T-cell (primary cell): ENCODE measurements at regions of chr2 and their contacts with region 1.

Region 1: DNA sequence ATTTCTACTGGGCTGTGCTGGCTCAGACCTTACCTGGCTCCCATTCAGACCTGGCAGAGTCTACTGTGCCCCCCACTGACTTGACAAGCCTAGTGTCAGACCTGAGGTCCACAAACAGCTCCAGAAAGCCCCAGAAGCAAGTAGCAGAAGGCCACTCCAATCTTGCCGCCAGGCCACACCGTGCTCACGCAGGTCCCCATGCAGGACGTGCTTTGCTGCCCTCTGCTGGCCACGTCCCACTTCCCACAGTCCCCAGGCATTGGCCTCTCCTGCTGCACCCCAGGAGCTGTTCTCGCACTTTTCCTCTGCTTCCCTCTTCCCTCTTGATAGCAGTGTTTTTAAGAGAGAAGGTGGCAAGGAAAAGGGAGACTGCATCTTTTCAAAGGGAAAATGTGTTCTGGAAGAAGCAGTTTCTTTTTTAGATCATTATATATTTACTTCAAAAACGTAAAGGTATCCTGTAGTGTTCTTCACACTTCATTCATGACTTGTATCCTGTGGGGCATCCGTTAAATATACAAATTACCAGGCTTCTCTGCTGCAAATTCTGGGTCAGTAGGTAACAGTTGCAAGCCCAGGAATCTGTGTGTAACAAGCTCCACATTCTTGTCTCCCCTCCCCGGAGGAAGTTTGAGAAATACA is 81.4 kb upstream of the PAPOLG start:
- DNase-seq: peak; percentile 37 to 82 (median 68)
- ATAC-seq: peak; percentile 84 to 95 (median 92)
- H3K4me3 ChIP-seq: no peak overlapping the region
- H3K4me3 Mint-ChIP-seq: no peak overlapping the region
- H3K27ac ChIP-seq: no peak overlapping the region
- H3K27ac Mint-ChIP-seq: no peak overlapping the region
- H3K4me1 ChIP-seq: peaks cover 0 to 5% of the 10 kb centered on the region in 2 experiments
- H3K4me1 Mint-ChIP-seq: peaks cover 0 to 4% (median 2%) of the 10 kb centered on the region in 3 donors
- H3K27me3 ChIP-seq: peaks cover 0 to 7% of the 10 kb centered on the region in 2 experiments
- H3K27me3 Mint-ChIP-seq: peaks cover 12% of the 10 kb centered on the region in 2 donors

Region 2: GRCh38 chr2:59021786-59022185 is 1652.9 kb before region 1 on chr2:
- CTCF ChIA-PET with region 1: interaction called in 1 of 2 experiments, 11 read pairs
- POLR2A ChIA-PET with region 1: no interaction called
- DNase-seq: no peak
- ATAC-seq: no peak
- H3K4me3 ChIP-seq: no peak overlapping the region
- H3K4me3 Mint-ChIP-seq: no peak overlapping the region
- H3K27ac ChIP-seq: no peak overlapping the region
- H3K27ac Mint-ChIP-seq: no peak overlapping the region
- H3K4me1 ChIP-seq: no peaks in the 10 kb centered on the region
- H3K4me1 Mint-ChIP-seq: no peaks in the 10 kb centered on the region
- H3K27me3 ChIP-seq: no peaks in the 10 kb centered on the region
- H3K27me3 Mint-ChIP-seq: no peaks in the 10 kb centered on the region

Region 3: DNA sequence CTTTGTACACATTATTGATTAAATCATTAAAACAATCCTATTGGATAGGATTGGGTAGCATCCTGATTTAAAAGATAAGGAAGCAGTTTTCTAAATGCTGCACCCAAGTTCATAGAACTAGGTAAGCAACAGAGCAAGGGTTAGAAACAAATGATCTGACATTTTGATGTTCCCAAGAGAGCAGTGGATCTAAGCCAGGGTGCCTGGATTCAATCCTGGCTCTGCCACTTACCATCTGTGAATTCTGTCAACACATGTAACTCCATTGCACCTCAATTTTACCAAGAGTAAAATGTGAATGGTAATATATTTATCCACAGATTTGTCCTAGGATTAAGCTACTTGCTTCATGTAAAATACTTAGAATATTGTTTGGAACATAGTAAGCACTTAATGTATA is 1450.9 kb before region 1 on chr2:
- CTCF ChIA-PET with region 1: no interaction called
- POLR2A ChIA-PET with region 1: no interaction called
- DNase-seq: no peak
- ATAC-seq: no peak
- H3K4me3 ChIP-seq: no peak overlapping the region
- H3K4me3 Mint-ChIP-seq: no peak overlapping the region
- H3K27ac ChIP-seq: no peak overlapping the region
- H3K27ac Mint-ChIP-seq: no peak overlapping the region
- H3K4me1 ChIP-seq: no peaks in the 10 kb centered on the region
- H3K4me1 Mint-ChIP-seq: no peaks in the 10 kb centered on the region
- H3K27me3 ChIP-seq: no peaks in the 10 kb centered on the region
- H3K27me3 Mint-ChIP-seq: peaks cover 1 to 6% of the 10 kb centered on the region in 2 donors

Region 4: DNA sequence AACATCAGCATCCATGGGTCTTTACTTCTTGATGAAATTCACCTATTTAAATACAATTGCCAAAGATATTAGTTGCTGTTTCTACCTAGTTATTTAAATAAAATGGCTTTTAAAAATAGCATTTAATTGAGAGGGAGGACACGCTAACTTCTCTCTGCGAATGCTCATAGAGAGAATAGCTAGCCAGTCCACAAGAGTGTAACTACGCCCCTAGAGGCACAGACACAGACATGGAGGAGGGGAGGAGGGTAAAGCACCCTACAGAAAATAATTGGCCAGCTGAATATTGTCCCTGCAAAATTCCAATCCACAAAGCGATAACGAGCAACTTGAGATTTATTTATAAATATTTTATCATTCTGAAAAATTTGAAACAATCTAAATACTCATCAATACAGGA is 15.6 kb before region 1 on chr2:
- CTCF ChIA-PET with region 1: no interaction called
- POLR2A ChIA-PET with region 1: no interaction called
- DNase-seq: no peak
- ATAC-seq: no peak
- H3K4me3 ChIP-seq: no peak overlapping the region
- H3K4me3 Mint-ChIP-seq: no peak overlapping the region
- H3K27ac ChIP-seq: no peak overlapping the region
- H3K27ac Mint-ChIP-seq: no peak overlapping the region
- H3K4me1 ChIP-seq: no peaks in the 10 kb centered on the region
- H3K4me1 Mint-ChIP-seq: peaks cover 0 to 6% (median 0%) of the 10 kb centered on the region in 3 donors
- H3K27me3 ChIP-seq: peaks cover 0 to 4% of the 10 kb centered on the region in 2 experiments
- H3K27me3 Mint-ChIP-seq: peaks cover 14 to 18% of the 10 kb centered on the region in 2 donors

Region 5: DNA sequence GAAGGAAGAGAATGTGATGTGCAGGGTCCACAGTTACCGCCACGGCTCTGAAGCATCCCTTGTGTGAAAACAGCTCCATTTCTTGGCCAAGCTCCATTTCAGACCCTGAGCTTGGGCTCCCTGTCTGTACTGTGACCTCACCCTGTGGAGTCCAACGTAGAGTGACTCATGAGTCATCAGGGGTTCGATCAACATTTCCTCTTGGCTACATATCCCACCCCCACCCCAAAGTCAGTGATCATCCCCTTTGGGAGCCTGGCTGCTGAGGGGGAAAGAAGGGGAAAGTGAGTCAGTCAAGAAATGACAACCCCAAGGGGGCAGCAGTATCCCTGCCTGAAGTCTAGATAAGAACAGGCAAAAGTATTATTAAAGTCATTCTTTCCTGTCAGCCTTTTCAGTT is 143.6 kb after region 1 on chr2:
- CTCF ChIA-PET with region 1: no interaction called
- POLR2A ChIA-PET with region 1: no interaction called
- DNase-seq: peak in 3 of 35 experiments; percentile 9 to 51 (median 36)
- ATAC-seq: no peak
- H3K4me3 ChIP-seq: no peak overlapping the region
- H3K4me3 Mint-ChIP-seq: peak overlapping the region in 1 of 3 donors; percentile 24
- H3K27ac ChIP-seq: peak overlapping the region; percentile 87
- H3K27ac Mint-ChIP-seq: peak overlapping the region; percentile 28 to 57
- H3K4me1 ChIP-seq: peaks cover 20 to 35% of the 10 kb centered on the region in 2 experiments
- H3K4me1 Mint-ChIP-seq: peaks cover 37 to 50% (median 40%) of the 10 kb centered on the region in 3 donors
- H3K27me3 ChIP-seq: no peaks in the 10 kb centered on the region
- H3K27me3 Mint-ChIP-seq: no peaks in the 10 kb centered on the region

Region 6: DNA sequence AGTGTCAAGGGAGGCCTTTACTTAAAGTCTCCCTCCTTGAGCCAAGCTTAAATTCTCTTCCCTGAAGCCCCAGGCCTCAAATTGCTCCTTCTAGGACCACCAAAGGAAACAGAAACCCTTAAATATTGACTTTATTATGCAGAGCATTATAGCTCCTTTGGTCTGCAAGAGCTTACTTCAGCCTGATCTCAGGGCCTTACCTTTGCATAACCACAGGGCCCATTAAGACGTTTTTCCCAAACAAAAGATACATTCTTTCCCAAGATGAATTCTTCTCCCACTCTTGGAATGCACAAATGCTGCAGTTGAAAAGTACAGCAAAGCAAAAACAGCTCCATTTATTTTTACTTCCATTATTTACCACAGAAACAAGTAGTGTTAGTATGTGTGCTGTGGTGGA is 1652.1 kb after region 1 on chr2:
- CTCF ChIA-PET with region 1: no interaction called
- POLR2A ChIA-PET with region 1: interaction called in 1 of 2 experiments, 14 read pairs
- DNase-seq: no peak
- ATAC-seq: no peak
- H3K4me3 ChIP-seq: no peak overlapping the region
- H3K4me3 Mint-ChIP-seq: no peak overlapping the region
- H3K27ac ChIP-seq: no peak overlapping the region
- H3K27ac Mint-ChIP-seq: no peak overlapping the region
- H3K4me1 ChIP-seq: peaks cover 0 to under 1% of the 10 kb centered on the region in 2 experiments
- H3K4me1 Mint-ChIP-seq: peaks cover 2 to 6% (median 5%) of the 10 kb centered on the region in 3 donors
- H3K27me3 ChIP-seq: no peaks in the 10 kb centered on the region
- H3K27me3 Mint-ChIP-seq: no peaks in the 10 kb centered on the region